Breast epithelium (tissue), 4 donors: ENCODE measurements at regions of chr7 and their contacts with region 1.

Region 1: DNA sequence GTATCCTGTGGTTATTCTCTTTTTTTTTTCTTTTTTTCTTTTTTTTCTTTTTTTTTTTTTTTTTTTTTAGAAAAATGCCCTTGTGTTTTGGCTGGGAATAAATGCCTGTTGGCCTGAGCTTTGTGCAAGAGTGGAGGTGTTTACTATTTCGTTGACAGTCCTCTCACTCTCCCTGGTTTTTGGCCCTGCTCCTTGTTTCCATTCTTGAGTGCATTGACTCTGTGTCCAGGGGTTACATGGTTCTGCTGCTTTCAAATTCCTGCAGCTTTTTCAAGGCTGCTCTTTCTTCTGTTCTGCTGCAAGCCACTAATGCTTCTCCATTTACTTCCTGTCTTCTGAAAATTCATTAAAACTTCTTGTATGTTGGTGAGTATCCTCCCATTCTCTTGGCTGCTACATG is 59.7 kb upstream of the TBX20 start:
- DNase-seq: no peak
- H3K4me3 ChIP-seq: no peak overlapping the region
- H3K27ac ChIP-seq: no peak overlapping the region
- H3K4me1 ChIP-seq: no peaks in the 10 kb centered on the region
- H3K27me3 ChIP-seq: no peaks in the 10 kb centered on the region
- CTCF ChIP-seq: no peak
- POLR2A ChIP-seq: no peak

Region 2: DNA sequence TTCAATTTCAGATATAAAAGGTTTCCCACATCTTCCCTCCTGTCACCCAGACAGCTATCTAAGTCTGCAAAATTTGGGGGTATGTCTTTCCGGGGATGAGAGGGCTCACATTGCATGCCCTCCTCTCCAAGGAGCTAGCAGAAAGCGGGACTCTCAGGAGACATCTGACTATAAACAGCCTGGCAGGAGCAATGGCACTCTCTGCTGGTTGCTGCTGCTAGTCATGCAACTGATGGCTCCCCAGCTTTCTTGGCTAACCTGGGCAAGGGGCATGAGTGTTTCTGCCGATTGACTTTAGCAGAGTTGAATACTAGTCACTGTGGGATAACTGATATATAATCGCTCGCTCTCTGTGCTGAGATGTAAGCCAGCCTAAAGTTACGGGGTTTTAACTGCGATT is 71.7 kb before region 1 on chr7:
- intact Hi-C with region 1: no loop called
- DNase-seq: no peak
- H3K4me3 ChIP-seq: no peak overlapping the region
- H3K27ac ChIP-seq: no peak overlapping the region
- H3K4me1 ChIP-seq: no peaks in the 10 kb centered on the region
- H3K27me3 ChIP-seq: peaks cover 0 to 33% of the 10 kb centered on the region in 2 donors
- CTCF ChIP-seq: no peak
- POLR2A ChIP-seq: no peak

Region 3: GRCh38 chr7:36661135-36661840 is 1347.7 kb after region 1 on chr7:
- intact Hi-C with region 1: loop called (anchors 10 kb)
- DNase-seq: no peak
- H3K4me3 ChIP-seq: no peak overlapping the region
- H3K27ac ChIP-seq: no peak overlapping the region
- H3K4me1 ChIP-seq: no peaks in the 10 kb centered on the region
- H3K27me3 ChIP-seq: no peaks in the 10 kb centered on the region
- CTCF ChIP-seq: no peak
- POLR2A ChIP-seq: no peak

Region 4: DNA sequence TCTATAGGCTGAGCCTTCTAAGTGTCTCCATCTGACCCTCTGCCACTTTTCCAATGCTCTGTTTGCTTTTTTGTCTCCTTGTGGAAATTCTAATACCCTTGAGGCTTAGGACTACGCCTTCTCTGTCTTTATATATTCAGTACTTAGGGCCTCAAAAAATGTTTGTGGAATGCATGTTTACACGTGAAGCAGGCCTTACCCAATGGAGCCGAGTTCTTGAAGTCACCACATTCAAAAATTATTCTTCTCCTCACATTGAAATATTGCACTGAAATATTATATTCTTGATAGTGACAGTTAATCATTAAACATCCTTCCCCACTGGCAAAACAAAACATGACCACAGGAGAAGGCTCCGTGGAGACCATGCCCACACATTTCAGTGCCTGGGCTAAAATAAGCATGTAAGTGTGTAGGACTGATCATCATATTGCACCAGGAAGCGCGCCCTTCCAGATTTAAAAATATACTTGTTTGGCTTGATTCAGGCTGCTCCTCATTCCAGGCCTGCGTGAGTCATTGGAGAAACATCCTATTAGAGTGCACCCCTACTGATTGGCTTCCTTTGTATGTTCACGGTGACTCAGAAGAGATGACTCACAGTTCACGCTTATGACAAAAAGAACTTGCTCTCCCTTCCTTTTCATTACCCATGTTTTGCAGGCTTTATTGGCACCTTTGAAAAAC is 1718.1 kb after region 1 on chr7:
- intact Hi-C with region 1: no loop called
- DNase-seq: peak; percentile 60 to 92
- H3K4me3 ChIP-seq: no peak overlapping the region
- H3K27ac ChIP-seq: peak overlapping the region; percentile 88 to 91
- H3K4me1 ChIP-seq: peaks cover 5% of the 10 kb centered on the region in 2 donors
- H3K27me3 ChIP-seq: no peaks in the 10 kb centered on the region
- CTCF ChIP-seq: no peak
- POLR2A ChIP-seq: no peak